SK-N-SH (cell line): ENCODE measurements at regions of chr14 and their contacts with region 1.

Region 1: GRCh38 chr14:96100161-96101029 is 61.2 kb downstream of the C14orf132 start:
- DNase-seq: peak; percentile 81
- H3K4me3 ChIP-seq: peak overlapping the region in 1 of 2 experiments; percentile 45; a peak in 1 of 4 replicates
- H3K27ac ChIP-seq: no peak overlapping the region
- H3K4me1 ChIP-seq: peaks cover 10 to 52% of the 10 kb centered on the region in 2 experiments; a peak in 2 of 4 replicates
- H3K27me3 ChIP-seq: no peaks in the 10 kb centered on the region
- CTCF ChIP-seq: peak; percentile 99
- EP300 ChIP-seq: no peak
- RAD21 ChIP-seq: peak; percentile 100

Region 2: DNA sequence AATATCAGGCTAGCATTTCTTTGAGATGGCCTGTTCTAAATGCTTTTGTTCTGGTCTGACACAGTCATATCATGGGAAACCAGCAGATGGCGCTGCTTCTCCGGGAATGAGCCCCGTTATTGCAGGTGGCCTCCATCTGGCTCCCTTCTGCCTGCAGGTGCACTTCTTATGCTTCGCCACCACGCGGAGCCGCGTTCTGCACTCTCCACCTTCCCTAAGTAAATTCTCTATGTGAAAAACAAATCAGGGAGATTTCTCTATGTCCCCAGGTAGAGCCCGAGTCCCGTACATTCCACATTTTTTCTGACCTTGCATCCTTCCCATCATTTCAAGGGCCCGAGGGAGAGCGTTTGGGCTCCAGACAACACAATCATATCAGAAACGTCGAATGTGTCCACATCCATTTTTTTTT is 539.4 kb before region 1 on chr14:
- CTCF ChIA-PET with region 1: interaction called, 15 read pairs
- POLR2A ChIA-PET with region 1: no interaction called
- DNase-seq: peak; percentile 87
- H3K4me3 ChIP-seq: peak overlapping the region in 1 of 2 experiments; percentile 40; a peak in 1 of 4 replicates
- H3K27ac ChIP-seq: no peak overlapping the region
- H3K4me1 ChIP-seq: no peaks in the 10 kb centered on the region; a peak in 1 of 4 replicates
- H3K27me3 ChIP-seq: no peaks in the 10 kb centered on the region
- CTCF ChIP-seq: peak; percentile 98
- EP300 ChIP-seq: no peak
- RAD21 ChIP-seq: peak; percentile 97

Region 3: GRCh38 chr14:96053600-96054381 is 46.6 kb before region 1 on chr14:
- CTCF ChIA-PET with region 1: interaction called, 94 read pairs
- POLR2A ChIA-PET with region 1: interaction called, 4 read pairs
- DNase-seq: peak; percentile 47
- H3K4me3 ChIP-seq: no peak overlapping the region
- H3K27ac ChIP-seq: peak overlapping the region; percentile 72 to 84
- H3K4me1 ChIP-seq: peaks cover 10 to 90% of the 10 kb centered on the region in 2 experiments; a peak in 3 of 4 replicates
- H3K27me3 ChIP-seq: no peaks in the 10 kb centered on the region
- CTCF ChIP-seq: no peak
- EP300 ChIP-seq: no peak
- RAD21 ChIP-seq: no peak

Region 4: GRCh38 chr14:96117100-96117897 is 16.9 kb after region 1 on chr14:
- CTCF ChIA-PET with region 1: interaction called, 51 read pairs
- POLR2A ChIA-PET with region 1: interaction called, 7 read pairs
- DNase-seq: peak; percentile 49
- H3K4me3 ChIP-seq: no peak overlapping the region
- H3K27ac ChIP-seq: peak overlapping the region in 1 of 2 experiments; percentile 84; a peak in 2 of 4 replicates
- H3K4me1 ChIP-seq: peaks cover 11 to 41% of the 10 kb centered on the region in 2 experiments; a peak in 3 of 4 replicates
- H3K27me3 ChIP-seq: no peaks in the 10 kb centered on the region
- CTCF ChIP-seq: no peak
- EP300 ChIP-seq: peak in 1 of 2 experiments; percentile 72; a peak in 2 of 4 replicates
- RAD21 ChIP-seq: 0 out of 2 replicates have a peak, but pooled peaks have one; percentile 2

Region 5: GRCh38 chr14:96176275-96176674 is 75.9 kb after region 1 on chr14:
- CTCF ChIA-PET with region 1: interaction called, 10 read pairs
- POLR2A ChIA-PET with region 1: no interaction called
- DNase-seq: no peak
- H3K4me3 ChIP-seq: no peak overlapping the region
- H3K27ac ChIP-seq: no peak overlapping the region
- H3K4me1 ChIP-seq: peaks cover 0 to 7% of the 10 kb centered on the region in 2 experiments; a peak in 1 of 4 replicates
- H3K27me3 ChIP-seq: no peaks in the 10 kb centered on the region
- CTCF ChIP-seq: no peak
- EP300 ChIP-seq: no peak
- RAD21 ChIP-seq: no peak

Region 6: GRCh38 chr14:96268431-96269358 is 168.3 kb after region 1 on chr14:
- CTCF ChIA-PET with region 1: interaction called, 920 read pairs
- POLR2A ChIA-PET with region 1: interaction called, 5 read pairs
- DNase-seq: no peak
- H3K4me3 ChIP-seq: no peak overlapping the region
- H3K27ac ChIP-seq: peak overlapping the region; percentile 40 to 87; a peak in 3 of 4 replicates
- H3K4me1 ChIP-seq: peaks cover 32 to 44% of the 10 kb centered on the region in 2 experiments
- H3K27me3 ChIP-seq: no peaks in the 10 kb centered on the region
- CTCF ChIP-seq: no peak
- EP300 ChIP-seq: peak in 1 of 2 experiments; percentile 95; a peak in 3 of 4 replicates
- RAD21 ChIP-seq: no peak

Region 7: GRCh38 chr14:96380735-96381134 is 280.3 kb after region 1 on chr14:
- CTCF ChIA-PET with region 1: interaction called, 12 read pairs
- POLR2A ChIA-PET with region 1: no interaction called
- DNase-seq: no peak
- H3K4me3 ChIP-seq: no peak overlapping the region
- H3K27ac ChIP-seq: no peak overlapping the region
- H3K4me1 ChIP-seq: peaks cover 0 to 2% of the 10 kb centered on the region in 2 experiments; a peak in 2 of 4 replicates
- H3K27me3 ChIP-seq: no peaks in the 10 kb centered on the region
- CTCF ChIP-seq: no peak
- EP300 ChIP-seq: no peak
- RAD21 ChIP-seq: no peak